ENCODE measurements at regions of chr16 and their contacts with region 1.

Region 1: DNA sequence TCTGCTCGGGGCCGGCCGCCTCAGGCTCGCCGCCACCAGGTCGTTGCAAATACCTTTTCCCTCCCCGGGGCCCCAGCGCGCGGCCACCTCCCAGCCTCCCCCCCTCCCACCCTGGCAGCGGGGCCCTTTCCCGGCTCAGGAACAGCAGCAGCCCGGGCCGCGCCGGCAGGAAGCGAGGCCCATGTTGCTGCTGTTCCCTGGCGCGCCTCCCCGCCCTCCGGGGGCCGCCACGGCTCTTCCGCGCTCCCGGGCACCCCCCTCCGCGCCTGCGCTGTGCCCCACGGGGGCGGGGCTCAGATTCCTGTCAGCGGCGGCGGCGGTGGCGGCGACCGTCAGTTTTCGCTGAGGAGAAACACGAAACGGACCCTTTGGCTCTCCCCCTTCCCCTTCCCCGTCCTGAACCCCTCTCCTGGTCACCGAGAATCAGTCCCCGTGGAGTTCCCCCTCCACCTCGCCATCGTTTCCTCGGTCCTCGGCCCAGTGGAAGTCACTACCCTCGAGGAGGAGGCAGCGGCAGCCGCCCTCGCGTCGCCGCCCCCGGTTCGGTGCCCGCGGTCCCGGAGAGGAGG is at the start of gene NFAT5:
- DNase-seq: peak; percentile 89 to 93
- ATAC-seq: peak; percentile 98
- H3K4me3 ChIP-seq: peak within 1 kb of the TSS; percentile 92 to 99
- H3K27ac ChIP-seq: peak within 1 kb of the TSS; percentile 96 to 98
- H3K4me1 ChIP-seq: no peaks in the 10 kb centered on the region
- H3K27me3 ChIP-seq: no peaks in the 10 kb centered on the region
- total RNA-seq, gene NFAT5: 67.8 to 94.6 TPM

Region 2: GRCh38 chr16:69396187-69397061 is 169.3 kb before region 1 on chr16:
- intact Hi-C with region 1: loop called in 1 of 2 experiments (anchors 2 kb)
- DNase-seq: peak in 1 of 2 donors; percentile 70
- ATAC-seq: peak; percentile 88
- H3K4me3 ChIP-seq: no peak overlapping the region
- H3K27ac ChIP-seq: peak overlapping the region in 1 of 2 donors; percentile 79
- H3K4me1 ChIP-seq: no peaks in the 10 kb centered on the region
- H3K27me3 ChIP-seq: no peaks in the 10 kb centered on the region